Panc1 (cell line): ENCODE measurements at regions of chr21 and their contacts with region 1.

Region 1: DNA sequence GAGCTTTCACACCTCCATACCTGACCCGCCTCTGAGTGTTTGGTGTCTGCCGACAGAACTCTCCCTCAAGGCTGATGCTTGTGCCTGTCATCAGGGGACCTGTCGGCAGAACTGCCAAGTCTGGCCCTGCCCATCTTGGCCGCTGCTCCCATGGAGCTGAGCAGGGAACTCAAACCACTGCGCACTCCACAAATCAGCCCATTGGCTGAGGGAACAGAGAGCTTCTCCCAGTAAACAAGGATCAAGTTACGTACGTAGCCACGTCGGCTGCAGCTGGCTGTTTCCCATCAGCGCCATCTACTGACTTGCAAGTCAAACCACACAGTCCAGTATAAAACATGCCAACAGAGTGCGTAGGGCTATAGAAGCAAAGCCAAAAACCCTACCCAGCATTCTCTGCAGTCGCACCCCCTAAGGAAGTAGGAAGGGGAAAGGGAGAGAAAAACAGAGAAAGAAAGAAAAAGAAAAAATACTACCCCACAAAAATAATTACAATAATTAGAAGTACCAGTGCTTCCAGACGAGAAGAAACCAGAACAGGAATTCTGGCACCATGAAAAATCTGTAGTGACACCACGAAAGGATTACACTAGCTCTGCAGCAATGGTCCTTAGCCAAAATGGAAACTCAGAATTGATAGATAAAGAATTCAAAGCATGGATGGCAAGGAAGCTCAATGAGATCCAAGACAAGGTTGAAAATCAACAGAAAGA is 13.1 kb downstream of the KRTAP13-1 start:
- DNase-seq: no peak
- ATAC-seq: no peak
- H3K4me3 ChIP-seq: no peak overlapping the region
- H3K27ac ChIP-seq: no peak overlapping the region
- H3K4me1 ChIP-seq: no peaks in the 10 kb centered on the region
- H3K27me3 ChIP-seq: no peaks in the 10 kb centered on the region
- CTCF ChIP-seq: peak; percentile 31

Region 2: GRCh38 chr21:31530897-31531705 is 1122.2 kb after region 1 on chr21:
- CTCF ChIA-PET with region 1: interaction called, 12 read pairs
- POLR2A ChIA-PET with region 1: no interaction called
- in situ Hi-C with region 1: no loop called
- intact Hi-C with region 1: no loop called
- DNase-seq: no peak
- ATAC-seq: peak; percentile 48; the same call in 1 of the 2 replicates
- H3K4me3 ChIP-seq: no peak overlapping the region
- H3K27ac ChIP-seq: no peak overlapping the region
- H3K4me1 ChIP-seq: no peaks in the 10 kb centered on the region
- H3K27me3 ChIP-seq: no peaks in the 10 kb centered on the region
- CTCF ChIP-seq: no peak